ENCODE measurements at regions of chr5 and their contacts with region 1.

Region 1: GRCh38 chr5:132386644-132387286 is 17.3 kb downstream of the SLC22A5 start:
- DNase-seq: peak; percentile 44 to 62
- H3K4me3 ChIP-seq: no peak overlapping the region
- H3K27ac ChIP-seq: peak overlapping the region; percentile 97
- H3K4me1 ChIP-seq: peaks cover 52% of the 10 kb centered on the region
- H3K27me3 ChIP-seq: no peaks in the 10 kb centered on the region
- CTCF ChIP-seq: peak; percentile 81

Region 2: GRCh38 chr5:132180134-132180745 is 206.5 kb before region 1 on chr5:
- CTCF ChIA-PET with region 1: no interaction called
- POLR2A ChIA-PET with region 1: no interaction called
- intact Hi-C with region 1: loop called (anchors 5 kb)
- DNase-seq: peak; percentile 43 to 46
- H3K4me3 ChIP-seq: no peak overlapping the region
- H3K27ac ChIP-seq: no peak overlapping the region
- H3K4me1 ChIP-seq: no peaks in the 10 kb centered on the region
- H3K27me3 ChIP-seq: no peaks in the 10 kb centered on the region
- CTCF ChIP-seq: peak; percentile 82

Region 3: GRCh38 chr5:132426525-132427138 is 39.9 kb after region 1 on chr5:
- CTCF ChIA-PET with region 1: no interaction called
- POLR2A ChIA-PET with region 1: interaction called, 4 read pairs
- intact Hi-C with region 1: loop called (anchors 1 kb)
- DNase-seq: peak; percentile 78 to 93
- H3K4me3 ChIP-seq: peak overlapping the region; percentile 11; the same call in 1 of the 2 replicates
- H3K27ac ChIP-seq: peak overlapping the region; percentile 87
- H3K4me1 ChIP-seq: peaks cover 79% of the 10 kb centered on the region
- H3K27me3 ChIP-seq: no peaks in the 10 kb centered on the region
- CTCF ChIP-seq: peak; percentile 44; the same call in 1 of the 2 replicates

Region 4: GRCh38 chr5:132495667-132496190 is 109.0 kb after region 1 on chr5:
- CTCF ChIA-PET with region 1: interaction called, 8 read pairs
- POLR2A ChIA-PET with region 1: interaction called, 25 read pairs
- intact Hi-C with region 1: loop called (anchors 1 kb)
- DNase-seq: peak; percentile 79 to 90
- H3K4me3 ChIP-seq: peak overlapping the region; percentile 65
- H3K27ac ChIP-seq: peak overlapping the region; percentile 96
- H3K4me1 ChIP-seq: peaks cover 62% of the 10 kb centered on the region
- H3K27me3 ChIP-seq: no peaks in the 10 kb centered on the region
- CTCF ChIP-seq: no peak; the same call in 1 of the 2 replicates

Region 5: DNA sequence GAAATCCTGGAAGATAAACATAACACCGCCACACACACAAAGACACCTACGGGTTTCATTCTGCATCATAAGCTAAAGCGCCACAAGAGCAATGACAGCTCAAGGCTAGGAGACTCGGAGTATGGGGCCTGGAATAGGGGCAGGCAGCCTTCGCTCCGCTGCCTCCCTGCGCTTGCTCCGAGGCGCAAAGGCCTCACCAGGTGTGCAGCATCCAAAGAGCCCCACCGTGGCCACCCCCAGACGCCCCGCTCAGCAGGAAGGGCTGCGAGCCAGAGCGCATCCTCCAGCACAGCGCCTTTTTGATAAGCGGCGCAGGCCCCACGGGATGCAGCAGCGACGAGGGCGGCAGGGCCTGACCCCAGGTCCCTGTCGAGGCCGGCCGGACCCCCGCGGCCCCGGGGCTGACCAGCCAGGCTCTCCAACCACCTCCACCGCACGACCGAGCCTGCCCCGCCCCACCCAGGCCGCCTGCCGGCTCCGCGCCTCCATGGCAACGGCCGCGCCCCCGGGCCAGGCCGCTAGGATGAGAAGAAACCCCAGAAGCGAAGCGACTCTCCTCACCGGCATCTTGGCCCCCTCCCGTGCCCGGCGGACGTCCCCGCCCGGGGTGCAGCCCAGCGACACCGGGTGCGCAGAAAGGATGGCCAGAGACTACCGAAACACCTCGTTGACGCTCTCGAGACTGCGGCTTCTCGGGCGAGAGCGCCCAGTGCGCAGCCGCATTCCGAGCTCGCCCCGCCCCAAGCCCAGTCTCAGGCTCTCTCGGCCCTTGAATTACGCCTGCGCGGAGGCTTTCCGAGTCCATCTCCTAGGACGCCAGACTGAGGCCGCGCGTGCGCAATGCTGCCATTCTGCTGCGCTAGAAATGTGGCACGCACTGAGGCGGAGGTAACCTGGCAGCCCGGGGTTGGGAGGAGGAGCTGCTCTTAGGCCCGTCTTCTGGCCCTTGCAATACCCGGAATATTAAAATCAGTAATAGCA is 350.4 kb after region 1 on chr5 and contains the start of gene KIF3A:
- CTCF ChIA-PET with region 1: no interaction called
- POLR2A ChIA-PET with region 1: interaction called, 8 read pairs
- intact Hi-C with region 1: loop called (anchors 10 kb)
- DNase-seq: peak; percentile 91 to 97
- H3K4me3 ChIP-seq: peak within 1 kb of the TSS; percentile 91
- H3K27ac ChIP-seq: no peak within 1 kb of the TSS
- H3K4me1 ChIP-seq: peaks cover 20% of the 10 kb centered on the region
- H3K27me3 ChIP-seq: no peaks in the 10 kb centered on the region
- CTCF ChIP-seq: no peak
- total RNA-seq, gene KIF3A: 10.1 and 15.2 TPM in 2 replicates

Region 6: GRCh38 chr5:132820162-132820754 is 433.5 kb after region 1 on chr5:
- CTCF ChIA-PET with region 1: no interaction called
- POLR2A ChIA-PET with region 1: no interaction called
- intact Hi-C with region 1: loop called (anchors 1 kb)
- DNase-seq: peak; percentile 72 to 81
- H3K4me3 ChIP-seq: no peak overlapping the region
- H3K27ac ChIP-seq: no peak overlapping the region
- H3K4me1 ChIP-seq: peaks cover 14% of the 10 kb centered on the region
- H3K27me3 ChIP-seq: no peaks in the 10 kb centered on the region
- CTCF ChIP-seq: peak; percentile 96

Measured in PC-9 (cell line).